Activated T-helper 2 cell treated with anti-CD3 and anti-CD28 coated beads, Interferon-gamma antibody, Interleukin-2, Interleukin-4, amounts not matched to agents 10 μg/mL and 5 μg/mL and 100 μg/mL, durations not matched to agents 14 hours and 24 hours and 36 hours (primary cell): ENCODE measurements at regions of chr11 and their contacts with region 1.

Region 1: GRCh38 chr11:16935518-16936302 is 78.5 kb downstream of the PLEKHA7 start:
- DNase-seq: no peak
- H3K4me3 Mint-ChIP-seq: no peak overlapping the region
- H3K27ac Mint-ChIP-seq: no peak overlapping the region
- H3K4me1 Mint-ChIP-seq: no peaks in the 10 kb centered on the region
- H3K27me3 Mint-ChIP-seq: peaks cover 11% of the 10 kb centered on the region

Region 2: GRCh38 chr11:16785520-16786128 is 150.1 kb before region 1 on chr11:
- intact Hi-C with region 1: loop called (anchors 5 kb)
- DNase-seq: peak; percentile 37
- H3K4me3 Mint-ChIP-seq: no peak overlapping the region
- H3K27ac Mint-ChIP-seq: no peak overlapping the region
- H3K4me1 Mint-ChIP-seq: peaks cover 3% of the 10 kb centered on the region
- H3K27me3 Mint-ChIP-seq: no peaks in the 10 kb centered on the region

Region 3: DNA sequence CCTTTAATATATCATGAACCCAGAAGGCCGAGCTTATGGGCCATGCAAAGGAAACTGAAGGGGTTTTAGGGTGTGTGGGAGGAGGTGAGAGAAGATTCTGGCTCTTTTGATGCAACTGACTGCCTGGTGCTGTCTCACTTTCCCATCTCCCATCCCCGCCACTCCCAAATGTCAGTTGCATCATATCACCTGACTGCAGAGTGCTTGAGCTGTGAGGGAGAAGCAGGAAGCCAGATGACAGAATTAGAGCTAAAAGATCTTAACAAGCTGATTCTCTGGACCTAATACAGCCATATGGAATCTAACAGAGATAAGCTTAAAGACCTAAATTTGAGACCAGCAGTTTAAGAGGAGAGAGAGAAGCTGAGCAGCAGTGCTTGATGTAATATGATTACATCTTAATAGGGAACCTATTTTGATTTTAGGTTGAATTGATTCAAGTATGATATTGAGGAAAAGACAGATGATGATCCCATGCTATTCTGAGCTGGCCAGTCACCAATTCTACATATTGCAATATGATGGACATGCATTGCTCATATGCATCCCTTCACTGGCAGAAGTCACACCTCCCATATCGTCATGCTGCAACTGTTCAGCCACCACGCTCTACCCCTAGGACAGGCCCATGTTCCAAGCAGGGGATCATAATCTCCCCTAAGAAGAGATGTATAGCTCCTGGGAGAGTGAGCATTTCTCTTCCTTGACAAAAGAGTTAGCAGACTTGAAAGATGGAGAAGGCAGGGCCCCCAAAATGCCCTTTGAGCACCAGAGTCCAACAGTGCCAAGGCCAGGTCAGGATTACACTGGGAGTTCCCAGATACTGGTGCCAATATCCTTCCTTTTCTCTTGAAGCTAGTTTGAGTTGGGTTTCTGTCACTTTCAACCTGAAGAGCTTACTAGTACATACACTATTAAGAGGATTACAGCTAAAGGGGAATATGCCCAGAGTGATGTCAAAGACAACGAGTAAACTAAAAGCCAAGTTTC is 33.6 kb after region 1 on chr11:
- intact Hi-C with region 1: no loop called
- DNase-seq: no peak
- H3K4me3 Mint-ChIP-seq: no peak overlapping the region
- H3K27ac Mint-ChIP-seq: no peak overlapping the region
- H3K4me1 Mint-ChIP-seq: peaks cover 10% of the 10 kb centered on the region
- H3K27me3 Mint-ChIP-seq: no peaks in the 10 kb centered on the region